OCI-LY7 (cell line): ENCODE measurements at regions of chr14 and their contacts with region 1.

Region 1: DNA sequence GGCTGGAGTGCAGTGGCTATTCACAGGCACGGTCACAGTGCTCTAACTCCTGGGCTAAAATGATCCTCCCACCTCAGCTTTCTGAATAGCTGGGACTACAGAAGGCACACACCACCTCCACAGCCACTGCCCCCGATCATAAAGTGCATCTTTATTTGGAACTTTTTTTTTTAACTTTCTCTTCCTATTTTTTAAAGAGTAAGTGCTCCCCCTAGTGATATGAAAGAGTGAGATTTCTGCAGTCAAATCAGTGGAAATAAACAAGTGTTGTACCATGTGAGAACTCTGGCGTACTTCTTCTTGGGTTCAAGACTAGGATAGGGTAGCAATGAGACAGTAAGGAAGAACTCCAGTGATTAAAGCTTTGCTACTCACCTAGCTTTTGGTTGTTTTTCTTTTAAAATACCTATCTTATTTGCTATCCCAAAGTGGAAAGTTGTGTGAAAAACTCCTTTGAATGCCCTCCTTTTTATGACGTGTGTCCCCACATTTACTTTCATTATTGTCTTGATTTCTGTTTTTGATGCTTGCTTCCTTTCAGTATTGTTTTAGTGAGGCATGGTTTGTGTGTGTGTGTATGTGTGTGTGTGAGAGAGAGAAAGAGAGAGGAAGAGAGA is 6.6 kb downstream of the PPP4R4 start:
- DNase-seq: peak; percentile 76
- H3K4me3 ChIP-seq: peak overlapping the region; percentile 3
- H3K27ac ChIP-seq: no peak overlapping the region
- H3K4me1 ChIP-seq: no peaks in the 10 kb centered on the region
- CTCF ChIP-seq: peak; percentile 92

Region 2: DNA sequence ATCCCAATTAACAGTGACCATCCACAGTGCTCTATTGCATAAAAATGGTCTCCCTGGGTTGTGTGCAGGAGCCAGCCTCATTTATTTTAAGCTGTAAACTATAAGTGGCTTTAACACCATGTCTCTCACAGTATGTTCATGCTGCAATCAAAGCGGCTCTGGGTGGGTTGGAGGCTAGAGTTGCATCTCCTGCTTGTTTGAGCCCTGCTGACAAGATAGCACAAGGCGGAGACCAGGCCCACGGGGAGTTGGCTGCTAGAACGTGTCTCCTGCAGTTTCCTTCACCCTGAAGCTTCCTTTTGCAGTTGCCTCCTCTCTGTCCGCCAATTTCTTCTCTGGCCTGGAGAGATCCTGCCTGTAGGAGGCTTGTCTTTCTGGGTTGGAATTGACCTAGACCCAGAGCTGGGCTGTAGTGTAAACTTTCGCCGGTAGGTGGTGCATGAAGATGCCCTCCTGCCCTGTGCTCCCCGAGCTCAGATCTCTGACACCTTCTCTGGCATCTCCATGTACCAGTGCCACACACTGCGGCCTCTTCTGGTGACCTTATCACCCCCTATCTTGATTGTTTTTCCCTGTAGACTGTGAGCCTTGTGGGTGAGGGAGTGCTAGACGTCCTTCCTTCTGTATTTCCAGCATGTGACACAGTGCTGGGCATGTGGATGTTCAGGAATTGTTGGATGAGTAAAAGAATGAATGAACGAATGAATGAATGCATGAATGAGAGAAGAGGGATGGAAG is 144.3 kb before region 1 on chr14:
- CTCF ChIA-PET with region 1: no interaction called
- POLR2A ChIA-PET with region 1: no interaction called
- intact Hi-C with region 1: loop called (anchors 1 kb)
- DNase-seq: peak; percentile 79
- H3K4me3 ChIP-seq: no peak overlapping the region
- H3K27ac ChIP-seq: no peak overlapping the region
- H3K4me1 ChIP-seq: no peaks in the 10 kb centered on the region
- CTCF ChIP-seq: peak; percentile 90

Region 3: GRCh38 chr14:94203473-94204210 is 22.9 kb after region 1 on chr14:
- CTCF ChIA-PET with region 1: no interaction called
- POLR2A ChIA-PET with region 1: no interaction called
- intact Hi-C with region 1: no loop called
- DNase-seq: no peak
- H3K4me3 ChIP-seq: no peak overlapping the region
- H3K27ac ChIP-seq: no peak overlapping the region
- H3K4me1 ChIP-seq: no peaks in the 10 kb centered on the region
- CTCF ChIP-seq: no peak

Region 4: GRCh38 chr14:94305620-94306019 is 124.9 kb after region 1 on chr14:
- CTCF ChIA-PET with region 1: no interaction called
- POLR2A ChIA-PET with region 1: no interaction called
- intact Hi-C with region 1: no loop called
- DNase-seq: no peak
- H3K4me3 ChIP-seq: no peak overlapping the region
- H3K27ac ChIP-seq: no peak overlapping the region
- H3K4me1 ChIP-seq: no peaks in the 10 kb centered on the region
- CTCF ChIP-seq: no peak